ENCODE measurements at regions of chr11 and their contacts with region 1.

Region 1: DNA sequence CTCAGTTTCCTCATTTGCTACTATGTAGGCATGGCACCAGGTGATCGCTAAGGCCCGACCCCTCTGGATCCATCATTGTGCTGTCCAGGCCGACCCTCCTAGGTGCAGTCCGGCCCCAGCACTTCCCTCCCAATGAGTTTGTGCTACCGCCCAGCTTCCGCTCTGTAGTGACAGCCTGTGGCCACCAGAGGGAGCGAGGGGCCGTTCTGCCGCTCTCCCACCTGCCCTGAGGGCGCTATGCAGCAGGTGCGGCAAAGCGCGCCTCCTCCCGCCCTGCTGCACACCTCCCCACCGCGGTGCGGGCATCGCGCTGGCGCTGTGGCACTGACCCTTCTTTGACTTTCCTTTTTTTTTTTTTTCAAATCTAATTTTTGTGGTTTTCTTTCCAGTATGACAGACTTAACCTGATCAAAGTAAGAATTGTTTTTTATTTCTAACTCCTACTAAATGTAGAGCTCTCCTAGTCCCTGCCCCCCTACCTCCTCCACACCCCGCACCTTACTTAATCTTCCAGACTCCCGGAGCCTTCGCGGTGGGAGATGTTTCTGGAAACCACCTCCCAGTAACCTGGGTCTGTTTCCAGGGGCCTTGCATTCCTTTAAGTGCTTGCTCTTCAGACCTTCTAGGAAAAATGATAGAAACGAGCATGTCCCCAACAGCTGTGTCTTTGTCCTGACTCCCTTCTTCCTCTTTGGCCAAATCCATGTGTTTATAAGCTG is 73.7 kb downstream of the SCN3B start:
- DNase-seq: peak; percentile 40 to 54
- ATAC-seq: peak; percentile 26 to 63 (median 50)
- H3K4me3 ChIP-seq: no peak overlapping the region
- H3K27ac ChIP-seq: no peak overlapping the region
- H3K4me1 ChIP-seq: peaks cover 0 to 13% (median 5%) of the 10 kb centered on the region in 9 donors
- H3K27me3 ChIP-seq: peaks cover 0 to 8% (median 0%) of the 10 kb centered on the region in 7 donors
- CTCF ChIP-seq: peak; percentile 79 to 96 (median 90)

Region 2: GRCh38 chr11:123511037-123511870 is 69.5 kb before region 1 on chr11:
- intact Hi-C with region 1: loop called (anchors 1 to 5 kb)
- DNase-seq: peak; percentile 81 to 83
- ATAC-seq: peak; percentile 86 to 94 (median 92)
- H3K4me3 ChIP-seq: no peak overlapping the region
- H3K27ac ChIP-seq: no peak overlapping the region
- H3K4me1 ChIP-seq: peaks cover 0 to 7% (median 0%) of the 10 kb centered on the region in 9 donors
- H3K27me3 ChIP-seq: no peaks in the 10 kb centered on the region
- CTCF ChIP-seq: peak; percentile 65 to 96 (median 90)

Region 3: GRCh38 chr11:123519055-123519796 is 61.5 kb before region 1 on chr11:
- intact Hi-C with region 1: loop called in 1 of 10 experiments (anchors 5 kb)
- DNase-seq: no peak
- ATAC-seq: peak; percentile 39 to 80 (median 64)
- H3K4me3 ChIP-seq: no peak overlapping the region
- H3K27ac ChIP-seq: peak overlapping the region; percentile 24 to 75 (median 66)
- H3K4me1 ChIP-seq: peaks cover under 1 to 40% (median 20%) of the 10 kb centered on the region in 9 donors
- H3K27me3 ChIP-seq: no peaks in the 10 kb centered on the region
- CTCF ChIP-seq: no peak

Region 4: DNA sequence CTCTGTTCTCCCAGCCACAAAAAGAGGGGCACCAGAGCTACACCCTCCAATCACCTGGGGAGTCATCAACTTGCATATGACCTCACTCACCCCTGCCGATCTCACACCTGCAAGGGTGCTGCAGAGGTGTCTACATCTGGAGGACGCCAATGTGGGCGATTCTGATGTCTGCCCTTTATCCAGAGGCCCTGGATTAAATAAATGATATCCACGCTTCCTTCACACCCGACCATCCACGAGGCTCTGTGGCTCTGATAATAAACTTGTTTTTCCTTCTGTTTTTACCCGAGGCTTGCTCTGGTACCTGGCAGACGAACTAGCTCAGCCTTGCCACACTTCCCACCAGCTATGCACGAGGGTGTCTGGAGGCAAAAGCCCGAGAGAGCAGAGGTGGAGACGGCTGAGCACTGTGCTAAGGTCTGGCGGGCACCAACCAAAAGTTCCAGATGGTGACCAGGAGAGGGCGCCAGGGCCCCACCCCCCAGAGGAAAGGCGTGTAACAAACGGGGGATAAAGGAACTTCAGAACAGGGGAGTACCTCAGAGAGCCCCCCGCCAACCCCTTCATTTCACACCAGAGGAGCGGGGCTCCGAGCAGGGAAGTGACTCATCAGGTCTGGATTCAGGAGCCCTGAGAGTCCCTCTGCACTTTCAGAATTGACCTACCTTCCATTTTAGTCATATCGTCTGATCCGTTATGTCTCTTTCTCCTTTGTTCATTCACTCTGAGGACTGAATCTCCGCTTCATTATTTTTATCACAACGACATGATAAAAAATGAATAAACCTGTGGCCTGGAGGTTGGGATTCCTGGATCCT is 60.2 kb after region 1 on chr11:
- intact Hi-C with region 1: no loop called
- DNase-seq: peak; percentile 19 to 29
- ATAC-seq: peak; percentile 69 to 89 (median 77)
- H3K4me3 ChIP-seq: no peak overlapping the region
- H3K27ac ChIP-seq: no peak overlapping the region
- H3K4me1 ChIP-seq: peaks cover 0 to 5% (median 0%) of the 10 kb centered on the region in 9 donors
- H3K27me3 ChIP-seq: no peaks in the 10 kb centered on the region
- CTCF ChIP-seq: peak; percentile 47 to 86 (median 81)

Region 5: GRCh38 chr11:123654566-123655081 is 73.9 kb after region 1 on chr11 and contains the start of gene SCN3B:
- intact Hi-C with region 1: no loop called
- DNase-seq: peak; percentile 66 to 73
- ATAC-seq: peak; percentile 95 to 98 (median 97)
- H3K4me3 ChIP-seq: peak within 1 kb of the TSS; percentile 45 to 78 (median 72)
- H3K27ac ChIP-seq: peak within 1 kb of the TSS in 9 of 10 donors; percentile 32 to 87 (median 76)
- H3K4me1 ChIP-seq: peaks cover 4 to 33% (median 21%) of the 10 kb centered on the region in 9 donors
- H3K27me3 ChIP-seq: peaks cover 0 to 66% (median 0%) of the 10 kb centered on the region in 7 donors
- CTCF ChIP-seq: no peak
- total RNA-seq, gene SCN3B: 0.26 to 3.4 (median 1.7) TPM

Region 6: GRCh38 chr11:123702139-123702538 is 121.4 kb after region 1 on chr11:
- intact Hi-C with region 1: loop called (anchors 1 to 5 kb)
- DNase-seq: peak; percentile 6 to 17
- ATAC-seq: peak in 4 of 8 donors; percentile 44 to 62 (median 56)
- H3K4me3 ChIP-seq: no peak overlapping the region
- H3K27ac ChIP-seq: no peak overlapping the region
- H3K4me1 ChIP-seq: peaks cover 0 to 11% (median 4%) of the 10 kb centered on the region in 9 donors
- H3K27me3 ChIP-seq: peaks cover 0 to 7% (median 0%) of the 10 kb centered on the region in 7 donors
- CTCF ChIP-seq: no peak

Region 7: GRCh38 chr11:123707606-123708205 is 127.0 kb after region 1 on chr11:
- intact Hi-C with region 1: loop called (anchors 1 to 5 kb)
- DNase-seq: peak in 1 of 2 donors; percentile 52
- ATAC-seq: peak in 5 of 8 donors; percentile 47 to 76 (median 65)
- H3K4me3 ChIP-seq: no peak overlapping the region
- H3K27ac ChIP-seq: no peak overlapping the region
- H3K4me1 ChIP-seq: peaks cover 0 to under 1% (median 0%) of the 10 kb centered on the region in 9 donors
- H3K27me3 ChIP-seq: peaks cover 0 to 7% (median 0%) of the 10 kb centered on the region in 7 donors
- CTCF ChIP-seq: peak; percentile 41 to 86 (median 74)

Measured in heart right ventricle (tissue), 16 donors.